RWPE1 (cell line): ENCODE measurements at regions of chr5 and their contacts with region 1.

Region 1: GRCh38 chr5:79020861-79021561 is 35.9 kb upstream of the ARSB start:
- DNase-seq: peak; percentile 60
- H3K27ac ChIP-seq: no peak overlapping the region
- CTCF ChIP-seq: peak; percentile 95

Region 2: GRCh38 chr5:79074641-79075040 is 53.6 kb after region 1 on chr5:
- CTCF ChIA-PET with region 1: interaction called, 11 read pairs
- POLR2A ChIA-PET with region 1: no interaction called
- DNase-seq: peak; percentile 59
- H3K27ac ChIP-seq: no peak overlapping the region
- CTCF ChIP-seq: no peak

Region 3: DNA sequence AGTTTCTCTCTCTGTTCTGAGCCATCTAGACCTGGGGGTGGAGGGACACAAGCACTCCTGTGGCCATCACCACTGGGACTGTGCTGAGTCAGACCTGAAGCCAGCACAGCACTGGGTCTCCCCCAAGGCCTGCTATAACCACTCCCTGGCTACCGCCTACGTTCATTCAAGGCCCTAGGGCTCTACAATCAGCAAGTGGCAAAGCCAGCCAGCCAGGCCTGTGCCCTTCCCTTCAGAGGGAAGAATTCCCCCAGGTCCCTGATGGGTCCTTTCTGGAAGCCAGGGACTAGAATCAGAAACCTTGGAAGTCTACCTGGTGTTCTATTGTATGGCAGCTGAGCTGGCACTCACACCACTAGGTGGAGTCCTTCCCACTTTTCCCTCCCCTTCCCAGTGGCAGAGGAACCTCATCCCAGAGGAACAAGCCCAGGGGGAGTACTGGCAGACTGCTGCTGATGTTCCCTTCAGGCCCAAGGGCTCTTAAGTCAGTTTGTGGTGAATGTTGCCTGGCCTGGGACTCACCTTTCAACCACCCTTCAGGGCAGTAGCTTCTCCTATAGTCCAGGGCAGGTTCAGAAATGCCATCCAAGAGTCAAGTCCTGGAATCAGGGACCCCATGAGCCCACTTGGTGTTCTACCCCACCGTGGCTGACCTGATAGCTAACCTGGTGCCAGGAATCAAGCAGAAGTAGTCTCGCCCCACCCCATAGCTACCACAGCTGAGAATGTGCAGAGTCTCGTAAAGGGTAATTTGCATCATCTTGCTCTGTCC is 235.0 kb after region 1 on chr5:
- CTCF ChIA-PET with region 1: interaction called, 10 read pairs
- POLR2A ChIA-PET with region 1: no interaction called
- DNase-seq: peak; percentile 37
- H3K27ac ChIP-seq: no peak overlapping the region
- CTCF ChIP-seq: peak; percentile 39

Region 4: DNA sequence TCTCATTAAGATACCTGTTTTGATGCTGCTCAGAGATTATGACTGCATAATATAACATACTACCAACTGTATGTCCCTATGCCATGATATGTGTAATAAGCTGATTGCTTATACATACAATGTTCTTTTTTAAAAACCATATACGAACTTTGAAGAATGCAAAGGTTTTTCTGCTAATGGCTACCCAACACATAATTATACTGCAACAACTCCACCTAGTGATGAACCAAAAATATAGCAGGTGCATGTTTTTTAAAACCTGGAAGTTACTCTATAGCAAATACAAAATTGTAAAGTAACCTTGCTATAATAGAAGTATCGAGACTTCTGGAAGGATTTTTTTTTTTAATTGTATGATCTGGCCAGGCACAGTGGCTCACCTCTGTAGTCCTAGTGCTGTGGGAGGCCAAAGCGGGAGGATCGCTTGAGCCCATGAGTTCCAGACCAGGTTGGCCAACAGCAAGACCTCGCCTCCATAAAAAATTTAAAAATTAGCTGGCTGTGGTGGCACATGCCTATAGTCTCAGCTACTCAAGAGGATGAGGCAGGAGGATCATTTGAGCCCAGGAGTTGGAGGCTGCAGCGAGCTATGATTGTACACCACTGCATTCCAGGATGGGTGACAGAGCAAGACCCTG is 443.8 kb after region 1 on chr5:
- CTCF ChIA-PET with region 1: interaction called, 24 read pairs
- POLR2A ChIA-PET with region 1: no interaction called
- DNase-seq: peak; percentile 64
- H3K27ac ChIP-seq: no peak overlapping the region
- CTCF ChIP-seq: peak; percentile 78